ENCODE measurements at regions of chr13 and their contacts with region 1.

Region 1: DNA sequence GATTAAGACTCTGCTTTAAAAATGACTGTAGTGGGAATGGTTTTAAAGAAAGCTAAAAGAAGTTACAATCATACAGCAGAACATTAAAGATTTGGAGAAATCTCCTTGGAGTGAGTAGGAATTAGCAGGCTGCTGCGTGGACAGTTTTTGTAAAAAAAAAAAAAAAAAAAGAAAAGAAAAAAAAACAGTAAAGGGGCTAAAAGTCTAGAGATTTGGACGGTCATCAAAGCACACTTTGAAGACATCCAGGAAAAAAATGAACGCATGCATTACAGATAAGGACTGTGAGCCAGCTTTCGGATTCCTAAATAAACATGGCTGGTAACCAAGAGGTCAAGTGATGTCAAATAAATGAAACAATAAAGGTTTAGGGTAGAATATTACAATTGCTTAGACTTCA is 1700.6 kb downstream of the PCDH9 start:
- DNase-seq: no peak
- ATAC-seq: no peak
- H3K4me3 ChIP-seq: no peak overlapping the region
- H3K27ac ChIP-seq: no peak overlapping the region
- H3K4me1 ChIP-seq: no peaks in the 10 kb centered on the region
- H3K27me3 ChIP-seq: no peaks in the 10 kb centered on the region
- CTCF ChIP-seq: no peak
- POLR2A ChIP-seq: no peak
- RAD21 ChIP-seq: no peak

Region 2: GRCh38 chr13:64471916-64472315 is 1057.6 kb before region 1 on chr13:
- CTCF ChIA-PET with region 1: no interaction called
- POLR2A ChIA-PET with region 1: no interaction called
- dilution Hi-C with region 1: no loop called
- in situ Hi-C with region 1: no loop called
- intact Hi-C with region 1: loop called (anchors 10 kb)
- DNase-seq: peak; percentile 60
- ATAC-seq: peak; percentile 69
- H3K4me3 ChIP-seq: no peak overlapping the region
- H3K27ac ChIP-seq: no peak overlapping the region
- H3K4me1 ChIP-seq: no peaks in the 10 kb centered on the region
- H3K27me3 ChIP-seq: no peaks in the 10 kb centered on the region
- CTCF ChIP-seq: peak; percentile 66
- POLR2A ChIP-seq: no peak
- RAD21 ChIP-seq: peak; percentile 90

Region 3: DNA sequence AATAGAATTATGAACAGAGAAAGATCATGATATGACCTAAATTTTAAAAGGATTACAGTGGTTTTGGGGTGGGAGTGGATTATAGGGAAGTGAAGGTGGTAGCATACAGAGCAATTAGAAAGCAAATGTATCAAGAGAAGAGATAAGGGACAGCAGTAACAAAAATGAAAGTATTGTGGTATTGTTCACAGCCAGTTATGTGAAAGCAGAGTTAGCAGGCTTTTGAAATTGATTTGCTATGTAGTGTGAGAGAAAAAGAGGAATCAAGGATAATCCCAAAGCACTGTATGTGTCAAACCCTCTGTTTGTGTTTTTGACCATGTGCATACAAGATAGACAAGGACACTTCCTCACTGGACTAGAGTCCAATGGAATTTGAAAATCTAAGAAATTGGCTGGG is 20.8 kb before region 1 on chr13:
- CTCF ChIA-PET with region 1: no interaction called
- POLR2A ChIA-PET with region 1: no interaction called
- dilution Hi-C with region 1: no loop called
- in situ Hi-C with region 1: no loop called
- intact Hi-C with region 1: no loop called
- DNase-seq: no peak
- ATAC-seq: no peak
- H3K4me3 ChIP-seq: no peak overlapping the region
- H3K27ac ChIP-seq: no peak overlapping the region
- H3K4me1 ChIP-seq: no peaks in the 10 kb centered on the region
- H3K27me3 ChIP-seq: no peaks in the 10 kb centered on the region
- CTCF ChIP-seq: no peak
- POLR2A ChIP-seq: no peak
- RAD21 ChIP-seq: no peak